ENCODE measurements at regions of chr7 and their contacts with region 1.

Region 1: DNA sequence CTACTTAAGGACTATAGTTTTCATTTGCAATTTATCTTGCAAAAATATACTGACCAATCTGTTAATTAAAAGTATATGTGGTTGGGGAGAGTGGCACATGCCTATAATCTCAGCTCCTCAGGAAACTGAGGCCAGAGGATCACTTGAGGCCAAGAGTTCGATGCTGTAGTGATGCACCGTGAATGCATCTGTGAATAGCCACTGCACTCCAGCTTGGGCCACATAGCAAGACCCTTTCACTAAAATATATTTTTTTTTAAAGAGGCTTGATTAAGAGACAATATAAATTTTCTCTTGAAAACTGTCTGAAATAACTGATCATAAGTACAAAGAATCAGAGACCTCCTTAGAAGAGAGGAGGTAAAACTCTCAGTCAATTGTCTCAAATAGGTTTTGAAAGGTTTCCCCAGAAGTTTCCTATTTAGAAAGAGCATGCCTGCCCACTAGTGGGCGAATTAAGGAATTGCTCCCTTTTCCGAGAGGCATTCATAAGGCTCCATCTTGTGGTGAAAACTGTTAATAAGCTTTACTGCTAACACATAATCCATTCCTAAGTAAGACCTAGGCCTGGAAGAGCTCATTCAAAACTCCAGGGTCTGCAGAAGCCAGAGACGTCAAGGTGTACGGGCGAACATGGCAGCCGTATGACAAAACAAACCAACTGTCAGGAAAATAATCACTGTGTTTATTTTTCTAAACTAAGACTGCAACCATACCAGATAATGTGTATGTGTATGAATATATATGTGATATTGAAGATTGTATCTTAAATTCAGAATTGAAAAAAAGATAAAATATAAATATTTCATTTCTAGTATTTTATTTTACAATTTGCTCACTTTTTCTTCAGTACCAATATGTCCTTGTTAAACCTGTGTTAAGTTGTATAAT is 6.8 kb upstream of the TAS2R40 start:
- DNase-seq: peak; percentile 72
- ATAC-seq: peak; percentile 85
- H3K4me3 Mint-ChIP-seq: no peak overlapping the region
- H3K27ac Mint-ChIP-seq: no peak overlapping the region
- H3K4me1 Mint-ChIP-seq: no peaks in the 10 kb centered on the region
- H3K27me3 Mint-ChIP-seq: peaks cover 15% of the 10 kb centered on the region

Region 2: DNA sequence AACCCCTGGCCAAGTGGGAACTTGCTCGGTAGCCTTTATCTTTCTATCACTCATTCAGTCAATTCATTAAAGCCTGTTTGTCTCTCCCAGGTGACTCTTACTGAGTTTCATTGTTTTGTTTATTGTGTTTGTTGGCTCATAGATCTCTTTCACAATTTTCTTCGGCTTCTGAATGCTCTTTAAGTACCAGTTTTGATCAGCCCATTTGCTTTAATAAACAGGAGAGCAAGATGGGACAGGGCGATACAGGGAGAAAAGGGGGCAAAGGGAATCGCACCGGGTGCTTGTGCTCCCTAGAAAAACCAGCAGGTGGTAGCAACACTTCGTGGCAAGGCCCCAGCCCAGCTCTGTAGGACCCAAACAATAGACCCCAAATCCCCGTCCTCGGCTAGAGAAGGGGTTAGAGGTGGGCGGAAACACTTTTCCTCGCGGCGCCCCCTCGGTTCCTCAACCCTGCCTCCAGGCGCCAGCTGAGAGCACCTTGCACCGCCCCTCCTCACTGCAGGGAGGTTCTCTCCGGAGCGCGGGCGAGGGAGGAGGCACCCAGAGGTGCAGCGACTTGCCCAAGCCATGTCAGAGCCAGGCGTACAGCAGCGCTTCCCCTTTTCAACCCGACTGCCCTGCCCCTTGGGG is 361.2 kb before region 1 on chr7:
- CTCF ChIA-PET with region 1: interaction called, 10 read pairs
- DNase-seq: peak; percentile 78
- ATAC-seq: peak; percentile 84
- H3K4me3 Mint-ChIP-seq: peak overlapping the region; percentile 88
- H3K27ac Mint-ChIP-seq: peak overlapping the region; percentile 77
- H3K4me1 Mint-ChIP-seq: peaks cover 4% of the 10 kb centered on the region
- H3K27me3 Mint-ChIP-seq: peaks cover 15% of the 10 kb centered on the region

Region 3: GRCh38 chr7:142880876-142881505 is 334.0 kb before region 1 on chr7:
- CTCF ChIA-PET with region 1: interaction called, 10 read pairs
- DNase-seq: peak; percentile 59
- ATAC-seq: peak; percentile 79
- H3K4me3 Mint-ChIP-seq: no peak overlapping the region
- H3K27ac Mint-ChIP-seq: no peak overlapping the region
- H3K4me1 Mint-ChIP-seq: no peaks in the 10 kb centered on the region
- H3K27me3 Mint-ChIP-seq: peaks cover 13% of the 10 kb centered on the region

Region 4: DNA sequence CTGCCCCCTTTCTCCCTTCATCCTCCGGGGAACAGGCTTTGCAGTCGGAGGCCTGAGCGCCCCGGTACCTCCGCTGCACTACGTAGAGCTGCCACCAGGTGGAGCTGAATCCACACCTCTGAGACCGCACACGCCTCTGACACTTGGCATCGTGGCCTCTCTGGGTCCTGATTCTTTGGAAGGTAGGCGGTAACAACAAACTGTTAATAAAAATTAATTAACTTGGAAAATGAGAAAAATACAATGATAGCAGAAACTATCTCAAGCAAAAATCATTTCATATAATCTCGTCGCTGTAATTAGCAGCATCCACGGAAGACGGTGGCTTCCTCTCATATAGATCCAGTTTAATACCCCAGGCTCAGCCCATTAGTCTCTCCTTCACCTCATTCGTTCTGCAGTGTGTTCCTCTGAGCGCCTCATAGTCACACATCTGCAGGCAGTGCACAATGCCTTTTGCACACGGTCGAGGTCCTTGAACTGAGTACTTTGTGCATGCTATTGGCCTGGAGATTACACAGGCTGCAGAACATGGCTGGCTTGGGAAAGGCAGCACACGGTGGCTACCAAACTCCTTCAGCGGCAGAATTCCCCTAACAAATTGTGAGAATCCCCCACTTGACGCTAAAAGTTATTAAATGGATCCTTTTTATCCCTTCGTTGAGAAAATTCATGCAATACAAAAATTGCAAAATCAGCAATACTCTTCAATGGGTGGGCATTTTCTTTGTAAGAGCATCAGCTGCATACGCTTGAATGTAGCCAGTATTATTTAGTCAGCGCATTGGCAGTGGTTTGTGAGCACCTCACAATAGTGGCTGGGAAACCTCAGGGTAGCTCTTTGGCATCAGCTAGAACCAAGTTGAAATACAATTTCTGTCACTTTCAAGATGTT is 206.8 kb before region 1 on chr7:
- CTCF ChIA-PET with region 1: interaction called, 276 read pairs
- DNase-seq: peak; percentile 83
- ATAC-seq: peak; percentile 86
- H3K4me3 Mint-ChIP-seq: no peak overlapping the region
- H3K27ac Mint-ChIP-seq: no peak overlapping the region
- H3K4me1 Mint-ChIP-seq: peaks cover 6% of the 10 kb centered on the region
- H3K27me3 Mint-ChIP-seq: peaks cover 20% of the 10 kb centered on the region

Region 5: DNA sequence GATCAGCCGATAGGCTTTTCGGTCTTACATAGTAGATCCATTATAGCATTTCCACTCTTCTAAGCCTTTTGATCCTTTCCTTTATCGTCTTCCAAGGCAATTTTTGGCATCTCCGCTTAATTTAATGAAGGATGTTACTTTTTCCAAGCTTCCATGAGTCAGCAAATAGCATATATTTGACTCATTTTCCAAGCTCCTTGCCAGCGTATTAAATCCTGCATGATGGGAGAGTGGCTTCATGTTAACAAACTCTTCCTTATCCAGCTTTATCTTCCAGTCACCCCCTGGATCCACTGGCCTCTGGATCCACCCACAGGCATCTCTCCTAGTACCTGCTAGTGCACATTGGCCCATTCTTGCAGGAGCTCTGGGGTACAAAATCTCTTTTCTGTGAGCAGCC is 201.1 kb before region 1 on chr7:
- CTCF ChIA-PET with region 1: interaction called, 276 read pairs
- DNase-seq: no peak
- ATAC-seq: no peak
- H3K4me3 Mint-ChIP-seq: no peak overlapping the region
- H3K27ac Mint-ChIP-seq: no peak overlapping the region
- H3K4me1 Mint-ChIP-seq: no peaks in the 10 kb centered on the region
- H3K27me3 Mint-ChIP-seq: peaks cover 33% of the 10 kb centered on the region

Region 6: GRCh38 chr7:143229054-143229790 is 14.2 kb after region 1 on chr7:
- CTCF ChIA-PET with region 1: interaction called, 14 read pairs
- DNase-seq: no peak
- ATAC-seq: no peak
- H3K4me3 Mint-ChIP-seq: no peak overlapping the region
- H3K27ac Mint-ChIP-seq: no peak overlapping the region
- H3K4me1 Mint-ChIP-seq: no peaks in the 10 kb centered on the region
- H3K27me3 Mint-ChIP-seq: peaks cover 21% of the 10 kb centered on the region

Region 7: DNA sequence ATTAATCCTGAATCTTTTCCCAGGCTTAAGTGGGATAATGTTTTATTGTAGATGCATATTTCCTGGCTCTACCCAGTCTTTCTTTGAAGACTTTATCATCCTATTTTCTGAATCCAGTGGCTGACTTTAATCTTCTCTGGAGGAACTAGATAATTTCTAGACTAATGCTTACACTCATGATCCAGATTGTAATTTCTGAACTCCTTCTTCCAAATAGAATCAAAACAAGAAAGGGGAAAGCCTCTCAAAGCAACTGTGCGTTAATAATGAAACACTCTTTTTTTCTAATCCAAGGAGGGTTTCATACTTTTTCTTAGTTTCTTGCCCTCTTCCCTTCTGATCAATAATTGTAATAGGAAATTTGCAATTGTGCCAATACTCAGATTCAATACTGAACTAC is 56.2 kb after region 1 on chr7:
- CTCF ChIA-PET with region 1: no interaction called
- DNase-seq: no peak
- ATAC-seq: no peak
- H3K4me3 Mint-ChIP-seq: no peak overlapping the region
- H3K27ac Mint-ChIP-seq: no peak overlapping the region
- H3K4me1 Mint-ChIP-seq: peaks cover 26% of the 10 kb centered on the region
- H3K27me3 Mint-ChIP-seq: no peaks in the 10 kb centered on the region

Region 8: DNA sequence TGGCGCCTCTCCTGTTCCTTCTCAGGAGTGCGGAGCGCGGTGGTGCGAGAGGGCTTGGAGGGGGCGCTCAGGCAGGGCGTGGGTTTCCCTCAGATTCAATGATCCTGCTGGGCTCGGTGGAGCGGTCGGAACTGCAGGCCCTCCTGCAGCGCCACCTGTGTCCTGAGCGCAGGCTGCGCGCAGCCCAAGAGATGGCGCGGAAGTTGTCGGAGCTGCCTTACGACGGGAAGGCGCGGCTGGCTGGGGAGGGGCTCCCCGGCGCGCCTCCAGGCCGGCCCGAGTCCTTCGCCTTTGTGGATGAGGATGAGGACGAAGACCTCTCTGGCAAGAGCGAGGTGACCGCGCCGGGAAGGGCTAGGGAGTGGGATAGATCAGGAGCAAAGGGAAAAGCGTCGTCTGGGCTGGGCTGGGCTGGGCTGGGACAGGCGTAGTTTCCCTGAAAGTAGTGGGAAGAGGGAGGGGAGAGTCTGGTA is 130.4 kb after region 1 on chr7:
- CTCF ChIA-PET with region 1: interaction called, 13 read pairs
- DNase-seq: peak; percentile 79
- ATAC-seq: peak; percentile 100
- H3K4me3 Mint-ChIP-seq: peak overlapping the region; percentile 61
- H3K27ac Mint-ChIP-seq: peak overlapping the region; percentile 49
- H3K4me1 Mint-ChIP-seq: peaks cover 12% of the 10 kb centered on the region
- H3K27me3 Mint-ChIP-seq: peaks cover 34% of the 10 kb centered on the region

Measured in activated CD8-positive, alpha-beta memory T cell treated with anti-CD3 and anti-CD28 coated beads, Interleukin-2, amount 10 ng/mL, durations not matched to agents 7 days and 5 days (primary cell).